WTC11 (cell line): ENCODE measurements at regions of chr2 and their contacts with region 1.

Region 1: GRCh38 chr2:227238238-227239237 is 74.1 kb downstream of the COL4A3 start:
- DNase-seq: peak; percentile 79
- ATAC-seq: peak; percentile 33; the same call in 1 of the 2 replicates
- H3K4me3 Mint-ChIP-seq: no peak overlapping the region
- H3K27ac Mint-ChIP-seq: no peak overlapping the region
- H3K4me1 Mint-ChIP-seq: peaks cover 33% of the 10 kb centered on the region
- H3K27me3 Mint-ChIP-seq: no peaks in the 10 kb centered on the region
- CTCF ChIP-seq: peak; percentile 83

Region 2: DNA sequence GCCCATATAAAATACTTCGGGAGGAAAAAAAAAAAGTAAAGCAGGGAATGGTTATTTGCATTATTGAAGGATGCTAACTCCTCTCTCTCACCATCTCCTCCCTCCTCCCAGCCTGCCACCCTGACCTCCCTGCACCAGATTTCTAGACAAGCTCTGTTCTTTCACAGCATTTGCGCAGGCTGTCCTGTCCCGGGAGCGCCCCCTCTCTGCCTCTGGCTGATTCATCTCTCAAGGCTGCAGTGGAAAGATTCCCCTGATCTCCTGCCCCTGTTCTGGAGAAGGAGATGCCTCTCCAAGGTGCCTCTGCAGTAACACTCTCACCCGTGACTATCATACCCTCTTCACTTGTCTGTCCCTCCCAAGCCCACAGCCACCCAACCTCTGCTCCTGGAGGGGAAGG is 113.0 kb before region 1 on chr2:
- CTCF ChIA-PET with region 1: interaction called, 99 read pairs
- POLR2A ChIA-PET with region 1: no interaction called
- DNase-seq: peak; percentile 65
- ATAC-seq: peak; percentile 82
- H3K4me3 Mint-ChIP-seq: no peak overlapping the region
- H3K27ac Mint-ChIP-seq: no peak overlapping the region
- H3K4me1 Mint-ChIP-seq: peaks cover 9% of the 10 kb centered on the region
- H3K27me3 Mint-ChIP-seq: no peaks in the 10 kb centered on the region
- CTCF ChIP-seq: peak; percentile 33; the same call in 1 of the 2 replicates

Region 3: GRCh38 chr2:227132986-227133385 is 105.6 kb before region 1 on chr2:
- CTCF ChIA-PET with region 1: interaction called, 99 read pairs
- POLR2A ChIA-PET with region 1: no interaction called
- DNase-seq: no peak
- ATAC-seq: no peak
- H3K4me3 Mint-ChIP-seq: no peak overlapping the region
- H3K27ac Mint-ChIP-seq: no peak overlapping the region
- H3K4me1 Mint-ChIP-seq: peaks cover 2% of the 10 kb centered on the region; the same call in 1 of the 2 replicates
- H3K27me3 Mint-ChIP-seq: no peaks in the 10 kb centered on the region
- CTCF ChIP-seq: no peak

Region 4: DNA sequence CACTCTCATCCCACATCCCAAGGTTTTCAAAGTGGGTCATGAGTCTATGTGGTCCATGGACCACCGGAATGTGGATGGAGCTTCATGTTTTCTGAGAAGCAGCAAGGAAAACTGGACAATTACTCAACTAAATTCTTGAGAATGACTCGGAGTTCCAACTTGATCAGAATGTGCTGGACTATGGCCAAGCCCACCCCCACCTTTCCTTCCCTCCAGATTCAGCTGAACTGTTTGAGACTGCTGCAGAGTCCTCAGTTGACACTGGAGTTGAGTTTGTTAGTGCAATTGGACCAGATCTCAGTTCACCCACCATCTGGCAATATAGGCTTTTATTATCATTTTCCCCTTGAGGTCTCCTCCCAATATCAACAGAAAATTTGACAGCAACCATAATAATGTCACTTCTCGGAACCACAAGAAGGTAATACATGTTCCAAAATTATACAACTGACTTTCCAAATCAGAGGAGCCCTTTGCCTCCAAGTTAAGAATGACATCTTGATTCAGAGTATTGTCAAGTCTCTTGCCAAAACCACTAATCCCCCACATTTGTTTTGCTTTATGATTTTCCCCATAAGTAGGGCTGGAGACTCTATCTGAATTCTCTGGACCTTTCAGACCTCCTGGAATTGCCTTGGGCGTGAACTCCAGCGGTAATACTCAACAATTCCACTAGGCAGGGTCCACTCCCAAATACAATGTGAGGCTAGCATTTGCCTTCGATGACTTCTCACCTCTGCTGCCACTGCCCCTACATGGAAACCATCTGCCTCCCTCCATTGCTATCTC is 83.4 kb before region 1 on chr2:
- CTCF ChIA-PET with region 1: interaction called, 10 read pairs
- POLR2A ChIA-PET with region 1: no interaction called
- DNase-seq: no peak
- ATAC-seq: 0 out of 2 replicates have a peak, but pooled peaks have one; percentile 39
- H3K4me3 Mint-ChIP-seq: no peak overlapping the region
- H3K27ac Mint-ChIP-seq: no peak overlapping the region
- H3K4me1 Mint-ChIP-seq: peaks cover 24% of the 10 kb centered on the region
- H3K27me3 Mint-ChIP-seq: no peaks in the 10 kb centered on the region
- CTCF ChIP-seq: no peak

Region 5: GRCh38 chr2:227228061-227228667 is 10.4 kb before region 1 on chr2:
- CTCF ChIA-PET with region 1: interaction called, 29 read pairs
- POLR2A ChIA-PET with region 1: no interaction called
- DNase-seq: no peak
- ATAC-seq: no peak
- H3K4me3 Mint-ChIP-seq: no peak overlapping the region
- H3K27ac Mint-ChIP-seq: no peak overlapping the region; the same call in 1 of the 2 replicates
- H3K4me1 Mint-ChIP-seq: no peaks in the 10 kb centered on the region; the same call in 1 of the 2 replicates
- H3K27me3 Mint-ChIP-seq: no peaks in the 10 kb centered on the region
- CTCF ChIP-seq: no peak

Region 6: DNA sequence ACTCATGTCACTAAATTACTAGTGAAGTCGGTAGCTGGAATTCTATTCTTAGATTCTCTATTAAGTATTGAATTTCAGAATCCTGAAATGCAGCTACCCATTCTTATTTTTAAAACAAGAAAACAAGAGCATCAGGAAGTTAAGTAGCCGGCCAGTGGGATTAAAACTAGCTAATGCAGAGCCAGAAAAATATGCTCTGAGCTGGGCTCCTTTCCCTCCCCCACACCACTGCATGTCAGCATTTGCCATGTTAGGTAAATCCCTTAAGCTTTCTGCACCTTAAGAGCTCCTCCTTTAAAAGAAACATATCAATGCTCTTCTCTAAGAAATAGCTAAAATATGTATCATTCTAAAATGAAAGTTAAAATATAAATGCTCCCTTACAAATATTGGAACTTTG is 14.3 kb after region 1 on chr2:
- CTCF ChIA-PET with region 1: interaction called, 29 read pairs
- POLR2A ChIA-PET with region 1: no interaction called
- DNase-seq: no peak
- ATAC-seq: no peak
- H3K4me3 Mint-ChIP-seq: no peak overlapping the region
- H3K27ac Mint-ChIP-seq: no peak overlapping the region
- H3K4me1 Mint-ChIP-seq: peaks cover 10% of the 10 kb centered on the region
- H3K27me3 Mint-ChIP-seq: no peaks in the 10 kb centered on the region
- CTCF ChIP-seq: no peak